ENCODE measurements at regions of chr19 and their contacts with region 1.

Region 1: DNA sequence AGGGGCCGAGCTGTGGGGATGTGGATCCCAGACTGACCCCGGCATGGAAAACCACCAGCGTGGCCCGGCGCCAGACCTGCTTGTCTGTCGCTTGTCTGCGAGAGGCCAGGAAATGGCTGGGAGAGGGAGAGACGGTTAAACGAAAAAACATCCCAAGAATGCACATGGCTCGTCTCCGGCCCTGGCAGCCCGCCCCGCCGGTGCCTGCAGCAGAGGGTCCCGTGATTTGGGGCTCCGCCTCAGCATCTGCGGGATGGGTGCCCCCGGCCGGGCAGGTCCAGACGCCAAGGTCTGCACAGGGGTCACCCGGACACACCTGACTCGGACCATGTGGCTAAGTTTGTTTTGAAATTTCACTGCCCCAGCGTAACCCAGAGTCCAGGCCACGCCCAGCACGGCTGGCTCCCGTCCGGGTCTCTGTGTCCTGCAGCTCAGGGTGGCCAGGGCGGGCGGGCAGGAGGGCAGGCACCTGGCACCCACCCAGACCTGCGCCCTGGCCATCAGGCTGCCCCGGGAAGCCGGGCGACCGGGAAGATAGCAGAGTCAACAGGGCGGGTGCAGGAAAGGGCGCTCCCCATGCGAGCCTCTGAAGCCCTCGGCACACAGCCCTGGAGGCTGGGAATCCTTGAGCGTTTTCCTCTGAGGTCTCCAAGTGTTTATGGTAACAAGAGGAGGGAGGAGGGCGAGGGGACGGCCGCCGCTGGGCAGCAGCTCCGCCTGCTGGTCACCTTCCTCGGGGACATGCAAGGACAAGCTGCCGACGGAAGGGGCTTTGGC is 103.2 kb downstream of the GADD45B start:
- DNase-seq: peak; percentile 94

Region 2: DNA sequence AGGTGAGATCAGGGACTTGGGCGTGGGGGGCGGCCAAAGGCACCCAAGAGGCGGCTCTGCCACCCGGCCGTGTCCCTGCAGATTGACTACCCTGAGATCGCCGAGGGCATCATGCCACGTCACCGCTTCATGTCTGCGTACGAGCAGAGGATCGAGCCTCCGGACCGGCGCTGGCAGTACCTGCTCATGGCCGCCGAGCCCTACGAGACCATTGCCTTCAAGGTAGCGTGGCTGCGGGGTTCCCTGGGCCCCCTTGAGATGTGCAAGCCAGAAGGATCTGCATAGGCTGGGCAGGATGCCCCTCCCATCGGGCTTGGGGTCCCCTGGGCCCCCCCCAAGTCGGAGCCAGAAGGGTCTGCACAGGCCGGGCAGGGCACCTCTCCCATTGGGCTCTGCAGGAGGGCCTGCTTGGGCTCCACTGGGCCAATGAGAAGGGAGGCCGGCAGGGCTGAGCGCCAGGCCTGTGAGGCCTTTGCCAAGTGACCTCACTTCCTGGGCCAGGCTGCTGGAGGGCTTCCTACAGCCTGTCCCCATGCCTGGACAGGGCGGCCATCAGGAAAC is 332.2 kb before region 1 on chr19:
- intact Hi-C with region 1: no loop called
- DNase-seq: no peak

Region 3: DNA sequence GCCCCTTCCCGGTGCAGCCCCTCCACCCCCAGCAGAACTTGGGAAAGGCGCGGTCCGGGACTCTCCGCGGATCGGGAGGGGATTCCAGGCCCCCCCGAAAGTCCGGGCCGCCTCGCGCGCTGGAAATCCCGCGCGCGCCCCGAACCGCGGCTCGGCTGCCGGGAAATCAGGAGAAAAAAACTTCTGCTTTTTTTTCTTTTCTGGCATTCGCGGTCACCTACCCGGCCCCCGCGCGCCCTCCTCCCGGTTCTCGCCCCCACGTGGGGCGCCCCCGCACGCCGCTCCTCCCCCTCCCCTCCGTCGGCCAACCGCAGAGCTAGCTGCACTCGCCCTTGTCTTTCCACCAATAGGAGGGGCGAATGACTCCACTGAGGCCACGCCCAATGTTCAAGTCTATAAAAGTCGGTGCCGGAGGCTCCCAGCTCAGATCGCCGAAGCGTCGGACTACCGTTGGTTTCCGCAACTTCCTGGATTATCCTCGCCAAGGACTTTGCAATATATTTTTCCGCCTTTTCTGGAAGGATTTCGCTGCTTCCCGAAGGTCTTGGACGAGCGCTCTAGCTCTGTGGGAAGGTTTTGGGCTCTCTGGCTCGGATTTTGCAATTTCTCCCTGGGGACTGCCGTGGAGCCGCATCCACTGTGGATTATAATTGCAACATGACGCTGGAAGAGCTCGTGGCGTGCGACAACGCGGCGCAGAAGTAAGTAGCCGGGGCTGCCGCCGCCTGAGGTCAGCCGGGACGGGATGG is 103.2 kb before region 1 on chr19 and contains the start of gene GADD45B:
- intact Hi-C with region 1: loop called (anchors 1 kb)
- DNase-seq: peak; percentile 99
- total RNA-seq, gene GADD45B: 54.4 TPM

Region 4: DNA sequence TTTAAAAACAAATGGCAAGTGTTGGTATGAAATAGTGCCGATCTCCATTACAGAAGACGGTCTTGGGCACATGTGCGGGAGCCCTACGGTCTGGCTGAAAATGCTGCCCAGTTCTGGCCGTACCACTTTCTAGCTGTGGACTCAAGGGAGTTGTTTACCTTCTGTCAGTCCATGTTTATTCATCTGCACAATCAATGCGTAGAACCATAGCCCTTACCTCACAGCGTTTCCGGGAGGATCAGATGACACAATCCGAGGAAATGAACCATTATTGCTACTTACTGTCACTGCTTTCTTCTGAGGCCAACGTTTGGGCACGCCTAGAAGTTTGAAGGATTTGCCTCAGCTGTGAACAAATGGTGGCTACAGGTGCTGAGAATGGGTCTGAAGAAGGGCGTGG is 72.0 kb before region 1 on chr19:
- intact Hi-C with region 1: no loop called
- DNase-seq: no peak

Region 5: DNA sequence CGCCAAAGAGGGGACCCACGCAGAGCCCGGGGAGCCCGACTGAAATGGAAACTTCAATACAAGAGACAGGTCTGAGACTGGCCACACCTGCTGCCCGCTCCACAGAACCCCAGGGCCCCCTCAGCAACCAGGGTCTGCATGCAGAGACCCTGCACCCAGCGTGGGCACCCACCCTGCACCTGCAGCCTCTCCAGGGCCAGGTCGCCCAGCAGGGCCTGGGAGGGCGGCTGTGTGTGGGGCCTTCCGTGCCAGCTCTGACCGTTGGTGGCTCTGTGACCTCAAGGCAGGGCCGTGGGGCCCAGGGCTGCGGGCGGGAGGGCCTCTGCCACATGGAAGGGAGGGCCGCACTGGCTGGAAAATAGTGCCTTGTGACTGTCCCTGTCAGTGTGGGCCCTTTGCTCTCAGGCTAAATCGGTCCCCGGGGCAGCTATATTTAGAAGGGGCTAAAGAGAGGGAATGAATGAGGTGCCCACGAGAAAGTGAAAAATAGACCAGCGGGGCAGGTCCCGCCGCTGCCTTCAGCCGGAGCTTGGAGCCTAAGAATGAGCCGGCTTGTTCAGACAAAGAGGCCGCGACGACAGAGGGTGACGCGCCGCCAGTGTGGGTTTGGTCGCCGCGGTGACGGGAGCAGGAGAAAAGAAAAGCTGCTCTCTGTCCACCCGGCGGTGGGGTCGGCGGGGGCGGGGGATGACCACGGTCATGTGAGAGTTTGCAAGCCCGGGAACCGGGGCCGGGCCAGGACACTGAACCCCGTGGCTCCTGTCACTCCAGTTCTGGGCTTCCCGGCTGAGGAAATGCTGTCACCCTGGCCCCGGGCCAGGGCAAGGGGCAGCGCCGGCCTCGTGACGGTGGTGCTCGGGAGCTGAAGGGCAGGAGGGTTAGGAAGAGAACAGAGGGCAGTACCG is 32.7 kb before region 1 on chr19:
- intact Hi-C with region 1: loop called (anchors 2 kb)
- DNase-seq: peak; percentile 89

Region 6: GRCh38 chr19:2602391-2603181 is 23.5 kb after region 1 on chr19:
- intact Hi-C with region 1: loop called (anchors 2 kb)
- DNase-seq: peak; percentile 86

Region 7: DNA sequence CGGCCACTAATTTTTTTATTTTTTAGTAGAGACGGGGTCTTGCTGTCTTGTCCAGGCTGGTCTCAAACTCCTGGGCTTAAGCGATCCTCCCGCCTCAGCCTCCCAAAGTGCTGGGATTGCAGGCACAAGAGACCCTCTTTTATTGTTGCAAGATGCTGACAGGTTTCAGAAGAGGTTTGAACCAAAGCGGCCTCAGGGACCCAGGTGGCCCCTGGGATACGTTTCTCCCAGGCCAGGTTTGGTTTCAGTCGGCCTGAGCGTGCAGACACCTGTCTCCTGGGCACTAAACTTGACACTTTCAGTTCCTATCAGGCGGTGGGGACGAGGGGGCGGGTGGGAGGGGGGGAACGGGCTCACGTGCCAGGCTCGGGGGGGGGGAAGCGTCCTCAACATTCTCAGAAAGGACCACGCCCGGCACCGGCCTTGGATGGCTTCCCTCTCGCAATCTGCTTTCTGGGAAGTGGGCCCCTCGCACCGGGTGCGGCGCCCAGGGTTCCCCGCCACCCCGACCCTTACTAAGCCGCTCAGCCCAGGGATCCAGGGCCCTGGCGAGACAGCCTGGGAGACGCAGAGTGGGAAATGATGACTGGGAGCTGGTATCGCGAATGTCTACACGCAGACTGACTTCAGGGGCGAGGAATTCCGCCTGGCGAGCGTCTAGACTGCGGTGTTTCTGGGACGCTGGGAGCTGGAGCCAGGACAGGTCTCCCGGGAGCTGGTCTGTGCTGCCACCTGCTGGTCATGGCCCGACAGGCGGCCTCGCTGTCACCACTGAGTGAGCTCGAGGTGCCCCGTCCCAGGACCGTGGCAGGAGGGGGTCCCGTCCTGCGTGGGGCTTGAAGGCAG is 31.8 kb after region 1 on chr19:
- intact Hi-C with region 1: loop called (anchors 2 kb)
- DNase-seq: peak; percentile 97

Region 8: DNA sequence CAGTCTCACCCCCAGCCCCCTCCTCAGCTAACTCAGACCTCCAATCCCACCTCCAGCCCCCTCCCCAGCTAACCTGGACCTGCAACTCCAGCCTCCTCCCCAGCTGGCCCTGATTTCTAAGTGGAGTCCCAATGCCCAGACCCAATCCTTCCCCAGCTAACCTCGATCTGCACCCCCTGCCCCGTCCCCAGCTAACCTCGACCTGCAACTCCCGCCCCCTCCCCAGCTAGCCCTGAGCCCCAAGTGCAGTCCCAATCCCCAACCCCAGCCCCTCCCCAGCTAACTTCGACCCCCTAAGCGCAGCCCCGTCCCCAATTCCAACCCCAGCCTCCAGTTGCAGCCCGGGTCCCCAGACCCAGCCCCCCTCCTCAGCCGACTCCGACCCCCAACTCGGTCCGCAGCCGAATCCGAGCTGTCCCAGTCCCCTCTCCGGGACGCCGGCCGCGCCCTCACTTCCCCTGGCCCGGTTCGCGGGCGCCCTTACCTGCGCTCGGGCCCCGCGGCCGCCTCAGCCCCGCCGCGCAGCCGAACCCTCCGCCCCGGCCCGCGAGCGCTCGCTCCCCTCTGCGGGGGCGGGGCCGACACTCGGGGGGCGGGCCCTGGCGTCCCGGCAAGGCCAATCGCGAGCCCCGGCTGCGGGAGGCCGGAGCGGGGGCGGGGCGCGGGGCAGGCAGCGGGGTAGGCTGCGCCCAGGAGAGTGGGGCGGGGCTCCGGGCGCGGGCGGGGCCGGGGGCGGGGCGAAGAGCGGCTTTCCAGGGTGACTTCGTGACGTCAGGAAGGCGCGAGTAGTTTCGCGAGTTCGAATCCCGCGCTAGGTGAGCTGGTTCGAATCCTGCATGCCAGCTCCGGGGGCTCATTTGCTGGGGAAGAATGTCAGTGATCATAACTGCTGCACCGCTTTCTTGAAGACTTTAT is 123.3 kb after region 1 on chr19 and contains the start of gene GNG7:
- intact Hi-C with region 1: no loop called
- DNase-seq: peak; percentile 97
- total RNA-seq, gene GNG7: 30.9 TPM

Measured in cardiac septum (tissue), 1 donor.